T-cell (primary cell): ENCODE measurements at regions of chr21 and their contacts with region 1.

Region 1: DNA sequence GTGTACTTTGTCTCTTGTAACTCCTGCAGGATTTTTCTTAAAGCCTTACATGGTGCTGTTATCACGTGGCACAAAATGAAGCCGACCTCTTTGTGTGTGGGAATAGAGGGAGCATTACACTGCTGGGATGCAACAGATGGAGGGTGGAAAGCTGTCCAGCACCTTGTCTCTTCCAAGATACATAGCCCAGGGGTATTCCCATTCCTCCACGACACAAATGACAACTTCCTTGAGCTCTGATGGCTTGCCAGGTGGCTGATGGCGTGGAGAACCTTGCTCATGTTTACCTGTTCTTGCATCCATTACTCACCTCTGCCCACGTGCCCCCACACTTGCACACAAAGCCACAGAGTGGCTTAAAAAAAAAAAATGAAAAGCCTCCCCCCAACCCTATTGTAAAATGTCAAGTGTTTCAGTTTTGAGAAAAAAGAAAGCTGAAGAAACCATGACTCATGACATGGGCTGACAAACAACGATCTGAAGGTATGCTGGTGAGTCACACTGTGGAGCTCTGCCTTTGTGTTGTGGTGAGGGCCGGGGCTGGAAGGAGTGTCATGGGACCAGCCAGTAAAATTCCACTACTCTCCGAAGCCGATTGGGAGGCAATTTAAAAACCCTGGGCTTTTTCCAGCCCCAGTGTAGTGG is 32.0 kb upstream of the ATP5PO start:
- DNase-seq: peak; percentile 67 to 94 (median 81)
- ATAC-seq: peak; percentile 65 to 70 (median 70)
- H3K4me3 ChIP-seq: peak overlapping the region; percentile 2 to 35
- H3K4me3 Mint-ChIP-seq: peak overlapping the region; percentile 74 to 80 (median 76)
- H3K27ac ChIP-seq: peak overlapping the region; percentile 99
- H3K27ac Mint-ChIP-seq: peak overlapping the region; percentile 99
- H3K4me1 ChIP-seq: peaks cover 45 to 74% of the 10 kb centered on the region in 2 experiments
- H3K4me1 Mint-ChIP-seq: peaks cover 73 to 88% (median 85%) of the 10 kb centered on the region in 3 donors
- H3K27me3 ChIP-seq: no peaks in the 10 kb centered on the region
- H3K27me3 Mint-ChIP-seq: no peaks in the 10 kb centered on the region

Region 2: GRCh38 chr21:33908760-33909159 is 38.8 kb before region 1 on chr21:
- CTCF ChIA-PET with region 1: no interaction called
- POLR2A ChIA-PET with region 1: no interaction called
- DNase-seq: no peak
- ATAC-seq: no peak
- H3K4me3 ChIP-seq: no peak overlapping the region
- H3K4me3 Mint-ChIP-seq: no peak overlapping the region
- H3K27ac ChIP-seq: no peak overlapping the region
- H3K27ac Mint-ChIP-seq: no peak overlapping the region
- H3K4me1 ChIP-seq: peaks cover 0 to 2% of the 10 kb centered on the region in 2 experiments
- H3K4me1 Mint-ChIP-seq: peaks cover 8 to 17% (median 9%) of the 10 kb centered on the region in 3 donors
- H3K27me3 ChIP-seq: no peaks in the 10 kb centered on the region
- H3K27me3 Mint-ChIP-seq: no peaks in the 10 kb centered on the region

Region 3: GRCh38 chr21:33931799-33932390 is 15.7 kb before region 1 on chr21:
- CTCF ChIA-PET with region 1: interaction called, 6 to 43 read pairs
- POLR2A ChIA-PET with region 1: interaction called, 10 to 69 read pairs
- DNase-seq: peak in 4 of 35 experiments; percentile 12 to 28 (median 20)
- ATAC-seq: peak in 1 of 4 experiments; percentile 32
- H3K4me3 ChIP-seq: peak overlapping the region; percentile 52 to 91
- H3K4me3 Mint-ChIP-seq: peak overlapping the region; percentile 97 to 99 (median 99)
- H3K27ac ChIP-seq: peak overlapping the region; percentile 92
- H3K27ac Mint-ChIP-seq: peak overlapping the region; percentile 98 to 100
- H3K4me1 ChIP-seq: peaks cover 38 to 43% of the 10 kb centered on the region in 2 experiments
- H3K4me1 Mint-ChIP-seq: peaks cover 42 to 49% (median 45%) of the 10 kb centered on the region in 3 donors
- H3K27me3 ChIP-seq: no peaks in the 10 kb centered on the region
- H3K27me3 Mint-ChIP-seq: no peaks in the 10 kb centered on the region

Region 4: GRCh38 chr21:34061983-34062382 is 114.4 kb after region 1 on chr21:
- CTCF ChIA-PET with region 1: interaction called in 1 of 2 experiments, 4 read pairs
- POLR2A ChIA-PET with region 1: interaction called in 1 of 2 experiments, 11 read pairs
- DNase-seq: no peak
- ATAC-seq: peak in 1 of 4 experiments; percentile 52
- H3K4me3 ChIP-seq: no peak overlapping the region
- H3K4me3 Mint-ChIP-seq: no peak overlapping the region
- H3K27ac ChIP-seq: no peak overlapping the region
- H3K27ac Mint-ChIP-seq: no peak overlapping the region
- H3K4me1 ChIP-seq: no peaks in the 10 kb centered on the region
- H3K4me1 Mint-ChIP-seq: no peaks in the 10 kb centered on the region
- H3K27me3 ChIP-seq: no peaks in the 10 kb centered on the region
- H3K27me3 Mint-ChIP-seq: no peaks in the 10 kb centered on the region